OCI-LY7 (cell line): ENCODE measurements at regions of chr10 and their contacts with region 1.

Region 1: DNA sequence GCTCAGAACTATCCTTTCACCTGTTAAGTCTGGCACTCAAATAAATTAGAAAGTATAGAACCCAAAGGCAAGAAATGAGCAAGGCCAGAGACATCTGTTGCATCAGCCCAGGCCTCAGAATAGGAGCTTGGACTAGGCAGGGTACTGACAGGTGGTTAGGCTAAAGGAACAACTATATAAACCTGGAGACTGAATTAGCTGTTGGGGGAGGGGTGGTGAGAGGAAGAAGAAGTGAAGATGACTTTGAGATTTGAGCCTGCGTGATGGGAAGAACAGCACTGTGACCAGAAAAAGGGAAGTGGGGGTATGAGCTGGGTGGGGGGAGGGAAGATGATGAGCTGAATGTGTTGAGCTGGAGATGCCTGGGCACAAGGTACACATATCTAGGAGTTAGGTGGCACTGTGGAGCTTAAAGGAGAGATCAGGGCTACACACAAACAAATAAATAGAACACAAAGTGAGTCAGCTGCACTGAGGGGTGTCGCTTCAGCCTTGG is 244.7 kb downstream of the PTEN start:
- DNase-seq: peak; percentile 99
- H3K4me3 ChIP-seq: peak overlapping the region; percentile 31
- H3K27ac ChIP-seq: peak overlapping the region; percentile 96
- H3K4me1 ChIP-seq: peaks cover 94% of the 10 kb centered on the region
- CTCF ChIP-seq: peak; percentile 85

Region 2: GRCh38 chr10:88027570-88027969 is 80.6 kb before region 1 on chr10:
- CTCF ChIA-PET with region 1: no interaction called
- POLR2A ChIA-PET with region 1: interaction called, 9 read pairs
- intact Hi-C with region 1: loop called (anchors 5 kb)
- DNase-seq: peak; percentile 61
- H3K4me3 ChIP-seq: peak overlapping the region; percentile 47
- H3K27ac ChIP-seq: peak overlapping the region; percentile 70
- H3K4me1 ChIP-seq: peaks cover 29% of the 10 kb centered on the region
- CTCF ChIP-seq: no peak

Region 3: DNA sequence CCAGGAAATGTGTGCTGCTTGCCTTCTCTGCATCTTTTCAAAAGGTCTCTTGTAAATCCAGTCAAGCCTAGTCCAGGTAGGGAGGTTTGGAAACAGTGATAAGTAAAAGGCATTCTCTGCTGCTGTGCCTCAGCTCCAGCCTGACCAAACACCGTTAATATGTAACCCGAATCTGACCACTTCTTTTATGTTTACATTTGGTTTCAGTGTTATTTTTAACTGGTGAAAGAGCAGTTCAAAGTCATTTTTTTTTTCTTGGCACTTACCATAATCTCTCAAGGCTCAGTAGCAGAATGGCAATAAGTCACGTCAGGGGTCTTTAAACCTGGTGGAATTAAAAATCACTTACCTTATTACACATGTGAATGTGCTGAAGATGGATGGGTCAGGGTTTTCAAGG is 27.9 kb before region 1 on chr10:
- CTCF ChIA-PET with region 1: interaction called, 4 read pairs
- POLR2A ChIA-PET with region 1: interaction called, 19 read pairs
- intact Hi-C with region 1: loop called (anchors 2 kb)
- DNase-seq: peak; percentile 44
- H3K4me3 ChIP-seq: peak overlapping the region; percentile 26
- H3K27ac ChIP-seq: peak overlapping the region; percentile 13
- H3K4me1 ChIP-seq: peaks cover 67% of the 10 kb centered on the region
- CTCF ChIP-seq: no peak

Region 4: DNA sequence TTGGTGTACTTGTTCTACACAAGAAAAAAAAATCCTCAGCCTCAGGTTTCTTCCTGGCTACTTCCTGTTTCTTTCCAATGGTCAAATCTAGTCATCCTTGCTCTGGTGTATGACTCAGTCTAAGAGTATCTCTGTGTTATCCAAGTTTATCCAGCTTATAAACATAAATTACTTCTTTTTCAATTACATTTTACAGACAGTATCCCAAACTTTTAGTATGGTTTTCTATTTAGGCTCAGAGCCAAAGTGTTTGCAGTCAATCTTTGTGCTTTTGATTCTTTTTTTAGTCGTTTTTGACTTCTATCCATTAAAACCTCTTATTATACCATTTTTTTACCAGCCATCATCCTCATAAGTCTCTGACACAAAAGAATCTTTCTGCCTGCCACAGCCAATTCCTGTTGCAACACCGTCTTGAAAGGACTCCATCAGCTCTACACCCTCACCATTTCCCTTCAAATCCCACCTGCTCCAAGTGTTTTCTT is 49.9 kb after region 1 on chr10:
- CTCF ChIA-PET with region 1: no interaction called
- POLR2A ChIA-PET with region 1: no interaction called
- intact Hi-C with region 1: no loop called
- DNase-seq: peak; percentile 23
- H3K4me3 ChIP-seq: no peak overlapping the region
- H3K27ac ChIP-seq: no peak overlapping the region
- H3K4me1 ChIP-seq: peaks cover 7% of the 10 kb centered on the region
- CTCF ChIP-seq: no peak

Region 5: DNA sequence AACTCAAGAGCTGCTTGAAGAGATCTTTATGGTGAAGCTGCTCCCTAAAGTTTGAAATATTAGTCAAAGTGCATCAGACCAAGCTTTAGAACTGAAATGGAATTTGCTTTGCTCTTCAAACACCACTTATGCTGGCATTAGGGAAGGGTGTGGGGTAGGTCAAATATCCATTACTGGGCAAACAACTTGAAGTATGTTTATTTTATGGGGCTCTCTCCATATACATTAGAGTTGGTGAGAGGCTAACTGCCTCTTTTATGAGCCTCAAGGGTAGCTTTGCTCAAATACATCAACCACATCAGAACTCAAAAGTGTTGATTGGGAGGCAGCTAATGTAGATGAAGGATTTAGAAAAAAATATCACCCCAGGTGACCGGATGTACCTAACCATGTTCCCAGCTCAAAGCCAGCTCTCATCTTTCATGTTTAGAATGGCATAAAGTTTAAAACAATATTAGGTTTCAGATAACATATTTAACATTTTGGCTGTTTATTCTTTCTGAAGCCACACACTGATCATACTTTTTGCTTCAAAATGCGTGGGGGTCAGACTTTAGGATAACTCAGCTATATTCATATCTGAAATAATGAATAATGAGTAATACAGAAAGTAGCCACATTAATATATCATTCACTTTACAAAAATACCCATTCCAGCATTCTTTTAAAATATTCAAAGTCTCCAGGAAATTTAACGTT is 73.9 kb after region 1 on chr10:
- CTCF ChIA-PET with region 1: interaction called, 11 read pairs
- POLR2A ChIA-PET with region 1: no interaction called
- intact Hi-C with region 1: no loop called
- DNase-seq: no peak
- H3K4me3 ChIP-seq: no peak overlapping the region
- H3K27ac ChIP-seq: no peak overlapping the region
- H3K4me1 ChIP-seq: no peaks in the 10 kb centered on the region
- CTCF ChIP-seq: no peak

Region 6: DNA sequence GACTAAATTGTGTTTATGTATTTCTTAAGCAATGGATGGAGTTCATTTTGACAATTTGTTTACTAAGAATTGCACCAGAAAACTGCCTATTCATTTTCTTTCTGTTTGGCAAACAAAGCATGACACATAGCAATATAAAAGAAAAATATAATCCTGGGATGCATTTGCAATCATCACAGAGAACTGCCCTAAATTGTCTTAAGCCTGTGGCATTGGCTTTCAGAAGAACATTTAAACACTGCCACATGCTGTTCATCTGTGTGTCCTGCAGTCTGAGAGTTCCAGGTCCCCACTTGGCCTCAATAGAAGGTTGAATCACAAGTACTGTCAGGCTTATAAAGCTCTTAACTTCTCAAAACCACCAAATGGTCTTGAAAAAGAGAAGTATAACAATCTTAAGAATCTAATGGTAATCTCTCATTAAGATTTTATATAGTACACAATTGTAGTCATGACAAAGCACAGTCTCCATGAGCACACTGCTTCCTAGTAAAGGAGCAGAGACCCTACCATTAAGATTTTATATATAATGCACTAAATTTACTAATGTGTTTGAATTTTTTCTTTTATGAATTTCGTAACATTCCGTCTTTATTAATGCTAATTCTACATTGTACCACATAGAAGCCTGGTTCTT is 445.1 kb after region 1 on chr10:
- CTCF ChIA-PET with region 1: no interaction called
- POLR2A ChIA-PET with region 1: no interaction called
- intact Hi-C with region 1: loop called (anchors 1 kb)
- DNase-seq: peak; percentile 77
- H3K4me3 ChIP-seq: no peak overlapping the region
- H3K27ac ChIP-seq: no peak overlapping the region
- H3K4me1 ChIP-seq: no peaks in the 10 kb centered on the region
- CTCF ChIP-seq: peak; percentile 97